A549 (cell line): ENCODE measurements at regions of chr17 and their contacts with region 1.

Region 1: DNA sequence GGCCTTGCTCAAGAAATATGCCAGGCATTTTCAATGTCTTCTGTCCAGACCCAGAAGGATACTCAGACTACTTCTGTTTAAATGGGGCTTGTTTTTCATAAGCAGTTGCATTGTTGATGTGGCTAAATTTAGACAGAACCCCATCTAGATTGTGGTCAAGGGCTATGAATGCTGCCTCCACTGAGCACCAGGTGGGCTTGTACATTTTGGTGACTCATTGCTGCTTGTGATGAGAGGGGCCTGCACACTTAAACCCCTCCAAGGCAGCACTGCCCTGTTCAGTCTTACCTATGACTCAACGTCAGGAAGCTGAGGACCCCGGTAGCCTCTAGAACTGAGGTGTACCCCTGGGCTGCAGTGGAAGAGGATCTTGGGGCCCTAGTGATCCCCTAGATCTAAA is 144.0 kb downstream of the PRKCA start:
- DNase-seq: no peak
- ATAC-seq: no peak
- H3K4me3 ChIP-seq: no peak overlapping the region
- H3K27ac ChIP-seq: no peak overlapping the region
- H3K4me1 ChIP-seq: peaks cover 33% of the 10 kb centered on the region
- CTCF ChIP-seq: no peak
- EP300 ChIP-seq: no peak
- POLR2A ChIP-seq: no peak
- RAD21 ChIP-seq: no peak

Region 2: DNA sequence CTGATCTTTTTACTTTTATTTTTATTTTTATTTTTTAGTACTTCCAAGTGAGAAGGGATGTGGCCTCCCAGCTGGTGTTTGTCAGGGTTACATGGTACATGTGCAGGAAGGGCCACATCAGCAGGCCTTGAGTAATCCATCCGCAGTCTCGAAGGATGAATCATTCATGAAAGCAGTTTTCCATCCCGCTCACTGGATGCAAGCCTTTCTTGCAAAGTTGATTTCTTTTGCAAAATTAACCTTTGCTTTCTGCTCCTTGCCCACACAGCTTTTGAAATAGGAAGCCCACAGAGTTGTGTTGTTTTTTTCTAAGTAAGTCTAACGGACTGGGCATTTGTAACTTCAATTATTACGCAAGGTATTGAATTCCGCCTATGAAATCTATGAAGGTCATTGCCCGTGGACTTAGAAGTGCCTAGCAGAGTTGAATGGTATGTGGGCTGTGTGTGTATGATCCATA is 13.4 kb after region 1 on chr17:
- CTCF ChIA-PET with region 1: interaction called, 10 read pairs
- POLR2A ChIA-PET with region 1: no interaction called
- DNase-seq: peak; percentile 91 to 94
- ATAC-seq: peak; percentile 93 to 96
- H3K4me3 ChIP-seq: peak overlapping the region; percentile 18; the same call in 1 of the 3 replicates
- H3K27ac ChIP-seq: peak overlapping the region; percentile 84 to 91
- H3K4me1 ChIP-seq: peaks cover 68% of the 10 kb centered on the region
- CTCF ChIP-seq: no peak
- EP300 ChIP-seq: peak; percentile 60 to 76; a peak in 3 of 5 replicates
- POLR2A ChIP-seq: no peak
- RAD21 ChIP-seq: peak in 1 of 2 experiments; percentile 53; a peak in 3 of 5 replicates

Region 3: DNA sequence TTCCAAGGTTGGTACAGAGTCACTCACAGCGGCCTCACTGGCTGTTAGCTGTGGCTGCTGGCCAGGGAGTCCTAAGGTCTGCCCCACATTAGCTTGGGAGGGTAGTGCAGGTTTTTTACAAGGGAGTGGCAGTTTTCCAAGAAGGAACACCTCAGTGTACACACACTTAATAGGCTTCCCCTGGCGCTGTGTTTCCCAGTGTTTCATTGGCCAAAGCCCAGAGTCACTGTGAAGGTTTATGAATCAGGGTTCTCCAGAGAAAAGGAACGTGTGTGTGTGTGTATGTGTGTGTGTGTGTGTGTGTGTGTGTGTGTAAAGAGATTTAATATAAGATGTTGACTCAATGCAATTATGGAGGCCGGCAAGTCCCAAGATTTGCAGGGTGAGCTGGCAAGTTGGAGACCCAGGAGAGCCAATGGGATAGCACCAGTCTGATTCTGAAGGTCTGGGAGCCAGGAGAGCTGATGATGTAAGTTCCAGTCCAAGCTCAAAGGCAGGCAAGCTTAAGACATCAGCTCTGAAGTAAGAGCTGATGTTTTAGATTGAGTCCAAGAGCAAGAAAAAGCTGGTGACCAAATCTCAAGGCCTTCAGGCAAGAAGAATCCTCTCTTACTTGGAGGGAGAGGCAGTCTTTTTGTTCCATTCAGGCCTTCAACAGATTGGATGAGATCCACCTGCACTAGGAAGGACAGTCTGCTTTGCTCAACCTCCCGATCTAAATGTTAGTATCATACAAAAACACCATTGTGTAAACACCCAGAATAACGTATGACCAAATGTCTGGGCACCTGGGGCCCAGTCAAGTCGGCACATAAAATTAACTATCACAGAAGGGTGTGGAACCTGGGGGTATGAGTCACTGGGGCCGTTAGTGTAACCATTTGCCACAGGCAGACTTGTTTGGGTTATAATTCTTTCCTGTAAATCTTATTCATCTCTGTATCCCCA is 62.8 kb after region 1 on chr17:
- CTCF ChIA-PET with region 1: no interaction called
- POLR2A ChIA-PET with region 1: no interaction called
- DNase-seq: peak; percentile 87 to 97
- ATAC-seq: peak; percentile 86 to 90
- H3K4me3 ChIP-seq: peak overlapping the region; percentile 23
- H3K27ac ChIP-seq: peak overlapping the region; percentile 87 to 90
- H3K4me1 ChIP-seq: peaks cover 74% of the 10 kb centered on the region
- CTCF ChIP-seq: no peak
- EP300 ChIP-seq: peak; percentile 77 to 82; a peak in 3 of 5 replicates
- POLR2A ChIP-seq: no peak
- RAD21 ChIP-seq: peak; percentile 28 to 57